ENCODE measurements at regions of chr1 and their contacts with region 1.

Region 1: GRCh38 chr1:23657659-23658275 is 33.8 kb upstream of the RPL11 start:
- DNase-seq: peak; percentile 70
- CTCF ChIP-seq: peak; percentile 76

Region 2: GRCh38 chr1:23585447-23586015 is 72.2 kb before region 1 on chr1:
- CTCF ChIA-PET with region 1: no interaction called
- POLR2A ChIA-PET with region 1: no interaction called
- DNase-seq: no peak
- CTCF ChIP-seq: no peak

Region 3: DNA sequence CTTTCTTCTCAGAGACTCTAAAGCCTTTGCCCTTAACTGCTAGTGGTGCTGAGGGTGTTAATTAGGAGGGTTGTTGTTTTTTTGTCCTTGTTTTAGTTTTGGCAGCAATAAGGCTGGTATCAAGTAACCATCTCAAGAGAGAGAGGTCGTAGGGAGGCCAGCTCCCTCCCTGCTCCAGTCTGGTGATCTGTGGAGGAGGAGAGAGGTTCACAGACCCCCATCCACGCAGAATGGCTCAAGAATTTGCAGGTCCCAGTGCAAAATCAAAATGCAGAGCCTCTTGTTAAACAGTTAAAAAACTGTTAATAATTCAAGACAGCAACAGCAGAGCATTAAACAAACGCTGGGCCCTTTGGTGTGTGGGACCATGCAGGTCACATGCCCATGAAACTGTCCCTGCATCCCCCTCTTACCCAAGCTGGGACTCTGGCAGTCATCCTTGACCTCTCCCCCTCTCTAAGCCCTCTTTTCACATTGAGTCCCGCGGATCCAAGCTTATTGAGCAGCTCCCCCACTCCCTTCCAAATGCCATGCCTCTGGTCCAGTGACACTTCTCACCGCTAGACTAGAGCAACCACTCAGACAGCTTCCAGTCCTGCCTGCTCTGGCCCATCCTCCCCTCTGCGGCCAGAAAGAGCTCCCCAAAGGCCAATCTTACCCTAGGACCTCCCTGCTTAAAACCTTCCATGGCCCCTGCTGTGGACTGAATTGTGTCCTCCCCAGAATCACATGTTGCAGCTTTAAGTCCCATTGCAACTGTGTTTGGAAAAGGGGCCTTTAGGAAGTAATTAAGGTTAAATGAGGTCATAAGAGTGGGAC is 13.8 kb before region 1 on chr1:
- CTCF ChIA-PET with region 1: interaction called, 42 read pairs
- POLR2A ChIA-PET with region 1: no interaction called
- DNase-seq: no peak
- CTCF ChIP-seq: no peak

Region 4: GRCh38 chr1:23670709-23671108 is 12.9 kb after region 1 on chr1:
- CTCF ChIA-PET with region 1: interaction called, 18 read pairs
- POLR2A ChIA-PET with region 1: no interaction called
- DNase-seq: no peak
- CTCF ChIP-seq: no peak

Region 5: DNA sequence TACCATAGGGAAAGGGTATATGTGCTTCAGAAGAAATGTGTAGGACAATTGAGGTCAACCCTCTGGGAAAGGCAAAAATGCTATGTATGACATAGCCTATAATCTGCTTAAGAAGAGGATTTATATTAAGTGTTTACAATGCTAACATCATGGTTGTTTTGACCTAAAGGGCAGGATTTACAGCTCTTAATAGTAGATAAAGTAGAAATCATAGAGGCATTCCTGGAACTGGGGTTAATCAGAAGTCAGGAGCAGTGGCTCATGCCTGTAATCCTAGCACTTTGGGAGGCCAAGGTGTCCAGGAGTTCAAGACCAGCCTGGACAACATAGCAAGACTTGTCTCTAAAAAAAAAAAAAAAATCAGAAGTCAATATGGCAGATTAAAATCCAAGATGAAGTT is 25.2 kb after region 1 on chr1:
- CTCF ChIA-PET with region 1: interaction called, 16 read pairs
- POLR2A ChIA-PET with region 1: no interaction called
- DNase-seq: no peak
- CTCF ChIP-seq: no peak

Region 6: GRCh38 chr1:23916209-23917131 is 258.7 kb after region 1 on chr1:
- CTCF ChIA-PET with region 1: no interaction called
- POLR2A ChIA-PET with region 1: no interaction called
- DNase-seq: peak; percentile 87
- CTCF ChIP-seq: peak; percentile 74

Measured in GM10248 (cell line).